Activated CD4-positive, alpha-beta T cell treated with anti-CD3 and anti-CD28 coated beads for 36 hours (primary cell): ENCODE measurements at regions of chr19 and their contacts with region 1.

Region 1: DNA sequence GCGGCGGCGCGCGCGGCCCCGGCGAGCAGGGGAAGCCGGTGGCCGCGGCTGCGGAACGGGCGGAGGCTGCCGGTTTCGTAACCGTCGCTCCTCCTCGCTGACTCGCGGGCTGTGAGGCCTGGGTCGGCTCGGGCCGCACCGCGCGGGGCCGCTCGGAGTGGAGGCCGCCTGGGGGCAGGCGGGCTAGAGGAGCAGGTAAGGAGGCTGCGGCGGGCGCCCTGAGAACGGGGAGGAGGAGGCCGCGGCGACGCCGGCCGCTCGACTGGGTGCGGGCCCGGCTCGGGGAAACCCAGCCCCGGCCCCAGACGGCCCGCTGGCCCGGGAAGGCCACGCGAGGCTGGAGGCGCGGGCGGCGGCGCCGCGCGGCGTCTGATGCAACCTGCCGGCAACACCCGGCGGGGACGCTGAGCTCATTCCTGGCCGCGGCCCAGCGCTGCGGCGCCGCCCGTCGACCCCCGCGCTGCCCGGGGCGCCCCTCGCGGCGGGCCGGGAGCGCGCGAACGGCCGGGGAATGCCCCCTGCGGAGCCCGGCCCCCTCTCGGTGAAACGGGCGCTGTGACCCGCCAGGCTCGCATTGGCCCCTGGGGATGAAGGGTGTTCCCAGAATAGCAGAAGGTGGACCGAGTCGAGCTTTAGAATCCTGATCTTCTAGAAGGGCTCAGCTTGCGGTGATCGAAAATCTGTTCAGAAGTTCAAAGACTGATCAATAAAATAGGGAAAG is at the start of gene CEBPG:
- DNase-seq: peak; percentile 78
- ATAC-seq: peak; percentile 42
- H3K4me3 Mint-ChIP-seq: peak within 1 kb of the TSS; percentile 94
- H3K27ac Mint-ChIP-seq: peak within 1 kb of the TSS; percentile 93
- H3K4me1 Mint-ChIP-seq: peaks cover 45% of the 10 kb centered on the region
- H3K27me3 Mint-ChIP-seq: no peaks in the 10 kb centered on the region
- total RNA-seq, gene CEBPG: 25.9 to 29.6 TPM

Region 2: DNA sequence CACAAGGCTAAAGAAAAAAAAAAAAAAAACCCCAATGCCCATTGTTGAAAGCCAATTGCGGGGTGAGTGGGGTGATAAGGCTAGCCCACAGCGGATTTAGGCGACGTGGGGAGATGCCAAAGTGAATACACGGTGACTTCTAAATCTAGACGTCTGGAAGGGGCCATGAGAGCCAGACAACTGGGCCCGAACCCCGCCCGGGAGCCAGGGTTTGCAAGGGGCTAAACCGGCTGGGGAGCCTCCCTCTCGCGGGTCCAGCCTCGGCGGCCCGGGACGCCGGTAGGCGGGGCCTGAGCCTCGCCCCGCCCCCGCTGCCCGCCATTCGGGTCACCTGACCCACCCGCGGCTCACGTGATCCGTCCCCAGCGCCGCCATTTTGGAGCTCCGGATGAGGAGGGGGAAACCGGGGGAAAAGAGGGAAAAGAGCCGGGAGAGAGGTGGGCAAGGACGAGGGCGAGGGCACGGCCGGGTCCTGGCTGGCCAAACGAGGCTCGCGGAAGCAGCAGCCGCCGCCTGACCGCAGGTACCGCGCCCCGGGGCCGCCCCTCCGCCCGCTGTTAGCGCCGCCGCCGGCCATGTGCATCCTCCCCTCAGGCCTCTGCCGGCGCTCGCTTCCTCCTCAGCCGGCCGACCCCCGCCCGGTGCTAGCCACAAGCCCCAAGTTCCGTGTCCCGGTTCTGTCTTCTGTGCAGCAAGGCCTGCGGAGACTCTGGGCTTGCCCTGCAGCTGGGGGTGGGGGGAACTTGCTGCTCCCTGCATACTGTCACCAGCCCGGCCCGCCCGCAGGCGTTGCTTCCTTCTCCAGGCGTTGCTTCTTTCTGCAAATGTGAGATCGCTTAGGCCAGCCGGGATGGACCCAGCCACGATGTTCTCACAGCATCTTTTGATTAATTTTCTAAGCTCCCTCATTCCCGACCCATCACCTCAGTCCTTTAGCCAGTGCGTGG is 1028.3 kb before region 1 on chr19 and contains the start of gene ZNF507:
- CTCF ChIA-PET with region 1: no interaction called
- POLR2A ChIA-PET with region 1: no interaction called
- intact Hi-C with region 1: loop called in 1 of 2 experiments (anchors 5 kb)
- DNase-seq: peak; percentile 93
- ATAC-seq: peak; percentile 82
- H3K4me3 Mint-ChIP-seq: peak within 1 kb of the TSS; percentile 92
- H3K27ac Mint-ChIP-seq: peak within 1 kb of the TSS; percentile 95
- H3K4me1 Mint-ChIP-seq: peaks cover 42% of the 10 kb centered on the region
- H3K27me3 Mint-ChIP-seq: peaks cover 2% of the 10 kb centered on the region
- total RNA-seq, gene ZNF507: 25.2 to 27.6 TPM

Region 3: DNA sequence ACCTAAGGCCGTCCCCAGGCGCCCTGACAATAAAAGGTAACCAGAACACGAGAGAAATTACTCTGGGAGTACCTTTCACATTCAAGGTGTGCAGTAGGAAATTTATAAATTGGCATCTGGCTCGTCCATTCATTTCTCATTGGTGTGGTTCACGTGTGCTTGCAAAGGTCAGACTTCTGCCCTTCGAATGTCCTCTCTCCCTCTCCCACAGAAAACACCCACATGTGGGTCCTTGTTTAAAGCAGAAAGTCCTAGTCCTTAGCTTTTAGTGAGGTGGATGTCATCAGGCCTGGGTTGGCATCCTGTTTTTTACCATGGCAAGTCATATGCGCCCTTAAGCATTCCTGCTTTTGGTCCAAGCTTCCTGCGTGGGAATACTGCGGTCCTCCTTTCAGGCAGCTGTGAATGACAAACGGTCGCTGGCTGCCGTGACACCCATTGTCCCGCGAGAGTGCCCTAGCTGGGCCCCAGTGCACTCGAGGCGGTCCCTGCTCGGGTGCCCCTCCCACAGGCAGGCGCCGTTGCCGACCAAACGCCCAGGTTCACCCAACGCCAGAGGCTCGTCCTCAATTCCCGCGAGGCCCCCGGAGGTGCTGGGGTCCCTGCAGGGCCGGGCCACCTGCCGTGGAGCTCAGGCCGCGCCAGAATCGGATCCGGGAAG is 682.4 kb before region 1 on chr19 and contains the start of gene NUDT19:
- CTCF ChIA-PET with region 1: no interaction called
- POLR2A ChIA-PET with region 1: no interaction called
- intact Hi-C with region 1: loop called in 1 of 2 experiments (anchors 2 kb)
- DNase-seq: peak; percentile 91
- ATAC-seq: peak; percentile 83
- H3K4me3 Mint-ChIP-seq: peak within 1 kb of the TSS; percentile 83
- H3K27ac Mint-ChIP-seq: peak within 1 kb of the TSS; percentile 92
- H3K4me1 Mint-ChIP-seq: peaks cover 56% of the 10 kb centered on the region
- H3K27me3 Mint-ChIP-seq: no peaks in the 10 kb centered on the region
- total RNA-seq, gene NUDT19: 14.7 to 17.7 TPM

Region 4: GRCh38 chr19:33176670-33177416 is 197.0 kb before region 1 on chr19:
- CTCF ChIA-PET with region 1: no interaction called
- POLR2A ChIA-PET with region 1: interaction called, 3 read pairs
- intact Hi-C with region 1: loop called (anchors 1 to 2 kb)
- DNase-seq: peak; percentile 97
- ATAC-seq: peak; percentile 91
- H3K4me3 Mint-ChIP-seq: peak overlapping the region; percentile 86
- H3K27ac Mint-ChIP-seq: peak overlapping the region; percentile 92
- H3K4me1 Mint-ChIP-seq: peaks cover 37% of the 10 kb centered on the region
- H3K27me3 Mint-ChIP-seq: no peaks in the 10 kb centered on the region

Region 5: GRCh38 chr19:33302175-33302973 is 71.5 kb before region 1 on chr19 and contains the start of gene CEBPA:
- CTCF ChIA-PET with region 1: interaction called, 5 read pairs
- POLR2A ChIA-PET with region 1: interaction called, 4 read pairs
- intact Hi-C with region 1: loop called (anchors 1 kb)
- DNase-seq: peak; percentile 78
- ATAC-seq: peak; percentile 95
- H3K4me3 Mint-ChIP-seq: peak within 1 kb of the TSS; percentile 45
- H3K27ac Mint-ChIP-seq: no peak within 1 kb of the TSS
- H3K4me1 Mint-ChIP-seq: no peaks in the 10 kb centered on the region
- H3K27me3 Mint-ChIP-seq: peaks cover 33% of the 10 kb centered on the region
- total RNA-seq, gene CEBPA: 0.11 TPM in 1 of 2 experiments, not detected in the other

Region 6: DNA sequence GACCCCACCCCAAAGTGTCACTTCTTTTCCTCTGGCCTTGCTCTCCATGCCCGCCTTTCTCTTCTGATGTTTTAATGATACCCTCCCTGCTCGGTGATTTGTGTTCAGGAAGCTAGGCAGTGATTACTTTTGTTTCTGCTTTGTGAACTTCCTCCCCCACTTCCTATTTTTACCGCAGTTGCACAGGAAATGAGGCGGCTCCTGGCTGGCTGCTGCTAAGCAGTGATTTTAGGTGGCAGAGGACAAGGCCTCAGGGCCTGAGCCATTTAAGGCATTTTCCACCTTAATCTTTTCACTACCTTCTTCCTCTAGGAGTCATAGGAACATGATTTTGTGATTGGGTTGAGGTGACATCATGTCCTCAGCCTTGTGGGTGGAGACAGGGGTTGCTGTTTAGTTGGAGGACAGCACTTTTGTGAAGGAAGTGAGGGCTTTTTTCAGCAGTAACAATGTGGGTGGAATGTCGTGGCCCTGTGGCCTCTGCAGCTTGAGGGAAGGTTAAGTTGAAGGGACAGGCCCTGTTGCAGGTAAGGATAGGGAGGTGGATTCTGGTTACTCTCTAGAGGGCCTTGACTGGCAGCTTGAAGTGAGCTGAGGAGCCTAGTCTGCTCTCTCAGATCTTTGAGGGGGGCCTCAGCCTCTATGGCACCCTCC is 896.2 kb after region 1 on chr19:
- CTCF ChIA-PET with region 1: no interaction called
- POLR2A ChIA-PET with region 1: no interaction called
- intact Hi-C with region 1: loop called in 1 of 2 experiments (anchors 10 kb)
- DNase-seq: peak; percentile 82
- ATAC-seq: peak; percentile 90
- H3K4me3 Mint-ChIP-seq: peak overlapping the region; percentile 53
- H3K27ac Mint-ChIP-seq: peak overlapping the region; percentile 95
- H3K4me1 Mint-ChIP-seq: peaks cover 72% of the 10 kb centered on the region
- H3K27me3 Mint-ChIP-seq: no peaks in the 10 kb centered on the region

Region 7: DNA sequence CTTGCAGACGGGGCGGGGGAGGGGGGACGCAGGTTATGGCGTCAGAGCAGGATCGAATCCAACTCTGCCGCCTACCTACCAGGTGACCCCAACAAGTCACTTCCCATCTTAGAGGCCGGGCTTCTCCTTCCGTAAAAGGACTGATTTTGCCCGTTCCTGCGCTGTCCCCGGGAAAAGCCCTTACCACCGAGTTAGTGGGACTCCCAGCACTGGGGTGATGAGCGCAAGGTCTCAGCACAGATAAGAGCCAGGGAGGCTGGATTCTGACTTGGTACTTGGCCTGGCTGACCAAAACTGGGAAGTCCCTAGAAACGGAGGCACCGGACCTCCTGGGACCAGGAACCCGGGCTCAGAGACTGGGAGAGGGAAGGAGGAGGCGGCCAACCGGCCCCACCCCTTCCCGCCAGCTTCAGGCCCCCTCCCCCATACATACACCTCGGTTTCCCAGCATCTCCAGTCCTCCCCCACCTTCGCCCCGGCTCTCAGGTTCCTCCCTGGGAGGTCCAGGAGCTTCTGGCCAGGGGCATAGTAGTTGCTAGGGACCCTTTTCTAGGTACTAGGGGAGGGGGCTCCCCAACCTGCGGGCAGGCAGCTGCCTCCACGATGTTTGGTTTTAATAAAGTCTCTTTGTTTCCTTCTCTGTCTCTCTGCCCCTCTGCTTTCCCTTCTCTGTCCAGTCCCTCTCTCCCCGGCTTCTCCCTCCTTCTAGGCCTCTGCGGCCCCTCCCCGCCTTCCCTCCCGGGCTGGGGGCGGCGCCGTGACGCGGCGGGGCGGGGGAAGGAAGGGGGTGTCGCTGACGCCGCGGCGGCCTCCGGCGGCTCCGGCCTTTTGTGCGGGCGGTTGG is 1625.9 kb after region 1 on chr19 and contains the start of gene GRAMD1A:
- CTCF ChIA-PET with region 1: no interaction called
- POLR2A ChIA-PET with region 1: no interaction called
- intact Hi-C with region 1: loop called in 1 of 2 experiments (anchors 5 kb)
- DNase-seq: peak; percentile 87
- ATAC-seq: peak; percentile 55
- H3K4me3 Mint-ChIP-seq: peak within 1 kb of the TSS; percentile 100
- H3K27ac Mint-ChIP-seq: peak within 1 kb of the TSS; percentile 100
- H3K4me1 Mint-ChIP-seq: peaks cover 69% of the 10 kb centered on the region
- H3K27me3 Mint-ChIP-seq: no peaks in the 10 kb centered on the region
- total RNA-seq, gene GRAMD1A: 185 to 227 TPM